Naive thymus-derived CD4-positive, alpha-beta T cell (primary cell): ENCODE measurements at regions of chr2 and their contacts with region 1.

Region 1: GRCh38 chr2:168231609-168232241 is 15.7 kb downstream of the STK39 start:
- DNase-seq: no peak
- ATAC-seq: no peak
- H3K4me3 ChIP-seq: no peak overlapping the region
- H3K4me3 Mint-ChIP-seq: no peak overlapping the region
- H3K27ac ChIP-seq: no peak overlapping the region
- H3K27ac Mint-ChIP-seq: peak overlapping the region in 1 of 9 donors; percentile 48
- H3K4me1 ChIP-seq: peaks cover 0 to 14% of the 10 kb centered on the region in 2 donors
- H3K4me1 Mint-ChIP-seq: peaks cover 15 to 35% (median 28%) of the 10 kb centered on the region in 7 donors
- H3K27me3 ChIP-seq: no peaks in the 10 kb centered on the region
- H3K27me3 Mint-ChIP-seq: no peaks in the 10 kb centered on the region

Region 2: DNA sequence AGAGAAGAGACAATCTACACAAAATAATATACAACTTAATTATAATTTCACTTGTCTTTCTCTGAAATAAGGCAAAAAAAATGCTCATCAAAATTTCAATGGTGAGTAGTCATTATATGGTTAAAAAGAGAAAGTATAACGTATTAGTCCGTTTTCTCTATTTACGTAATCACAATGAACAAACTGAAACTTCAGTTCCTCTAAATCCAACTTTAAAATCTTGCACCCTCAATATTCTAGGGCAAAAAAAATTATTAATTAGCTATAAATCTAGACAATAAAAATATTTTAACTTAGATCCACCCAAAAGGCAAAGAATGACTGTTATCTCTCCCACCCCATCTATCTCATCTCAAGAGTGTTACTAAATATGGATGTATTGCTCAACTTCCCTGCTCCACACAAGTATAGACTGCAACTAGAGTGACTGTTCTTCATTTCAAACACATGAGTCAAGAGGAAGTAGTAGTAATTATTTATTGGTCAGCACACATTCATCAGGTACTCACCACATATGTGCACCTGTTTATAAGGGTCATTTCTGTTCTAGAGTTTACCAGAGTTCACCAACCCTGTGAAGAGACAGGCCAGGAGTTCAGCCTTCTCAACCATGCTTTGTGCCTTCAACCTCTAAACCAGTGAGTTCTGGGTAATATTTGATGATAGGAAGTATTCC is 20.7 kb before region 1 on chr2:
- CTCF ChIA-PET with region 1: no interaction called
- POLR2A ChIA-PET with region 1: no interaction called
- intact Hi-C with region 1: loop called in 1 of 2 experiments (anchors 2 kb)
- DNase-seq: no peak
- ATAC-seq: peak; percentile 83
- H3K4me3 ChIP-seq: no peak overlapping the region
- H3K4me3 Mint-ChIP-seq: peak overlapping the region in 3 of 10 donors; percentile 6 to 35 (median 7)
- H3K27ac ChIP-seq: no peak overlapping the region
- H3K27ac Mint-ChIP-seq: peak overlapping the region in 1 of 9 donors; percentile 7
- H3K4me1 ChIP-seq: peaks cover 7 to 24% of the 10 kb centered on the region in 2 donors
- H3K4me1 Mint-ChIP-seq: peaks cover 37 to 64% (median 51%) of the 10 kb centered on the region in 7 donors
- H3K27me3 ChIP-seq: no peaks in the 10 kb centered on the region
- H3K27me3 Mint-ChIP-seq: no peaks in the 10 kb centered on the region